ENCODE measurements at regions of chr19 and their contacts with region 1.

Region 1: DNA sequence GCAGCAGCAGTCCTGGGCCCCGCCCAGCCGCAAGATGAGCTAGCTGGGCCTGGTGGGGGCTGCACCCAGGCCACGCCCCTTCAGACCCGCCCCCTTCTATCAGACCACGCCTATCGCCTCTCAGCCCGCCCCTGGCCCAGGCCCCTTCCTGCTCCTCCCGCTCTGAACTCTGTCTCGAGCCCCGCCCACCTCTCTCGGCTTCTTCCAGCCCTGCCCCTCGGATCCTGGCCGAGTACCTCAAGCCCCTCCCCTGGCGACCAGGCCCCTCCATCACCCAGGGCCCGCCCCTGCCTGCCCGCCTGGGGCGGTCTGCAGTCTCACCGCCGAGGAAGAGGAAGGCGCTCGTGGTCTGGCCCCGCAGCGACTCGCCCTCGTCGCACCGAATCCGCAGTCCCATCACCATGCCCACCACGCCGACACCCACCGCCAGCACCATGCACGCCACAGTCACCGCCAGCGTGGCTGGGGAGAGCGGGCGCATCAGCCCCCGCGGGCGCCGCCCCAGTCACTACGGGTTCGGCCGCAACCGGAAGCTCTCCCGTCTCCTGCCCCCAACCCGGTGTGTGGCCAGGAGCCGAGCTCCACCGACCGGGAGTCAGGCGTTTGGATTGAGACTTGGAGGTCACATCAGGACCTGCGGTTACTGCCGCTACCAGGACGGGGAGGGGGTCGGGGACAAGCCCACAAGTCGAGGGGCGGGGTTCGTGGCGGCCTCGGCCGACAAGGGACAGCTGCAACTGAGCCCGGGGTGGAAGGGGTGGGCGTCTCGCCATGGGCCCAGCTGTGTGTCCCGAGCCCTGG is 1.0 kb downstream of the CLDND2 start:
- DNase-seq: peak; percentile 98
- H3K4me3 ChIP-seq: peak overlapping the region; percentile 83
- H3K27ac ChIP-seq: peak overlapping the region; percentile 81
- H3K27me3 ChIP-seq: peaks cover 6% of the 10 kb centered on the region
- CTCF ChIP-seq: no peak

Region 2: GRCh38 chr19:51219307-51219706 is 148.5 kb before region 1 on chr19:
- CTCF ChIA-PET with region 1: no interaction called
- POLR2A ChIA-PET with region 1: no interaction called
- DNase-seq: no peak
- H3K4me3 ChIP-seq: no peak overlapping the region
- H3K27ac ChIP-seq: no peak overlapping the region
- H3K27me3 ChIP-seq: no peaks in the 10 kb centered on the region
- CTCF ChIP-seq: no peak

Region 3: DNA sequence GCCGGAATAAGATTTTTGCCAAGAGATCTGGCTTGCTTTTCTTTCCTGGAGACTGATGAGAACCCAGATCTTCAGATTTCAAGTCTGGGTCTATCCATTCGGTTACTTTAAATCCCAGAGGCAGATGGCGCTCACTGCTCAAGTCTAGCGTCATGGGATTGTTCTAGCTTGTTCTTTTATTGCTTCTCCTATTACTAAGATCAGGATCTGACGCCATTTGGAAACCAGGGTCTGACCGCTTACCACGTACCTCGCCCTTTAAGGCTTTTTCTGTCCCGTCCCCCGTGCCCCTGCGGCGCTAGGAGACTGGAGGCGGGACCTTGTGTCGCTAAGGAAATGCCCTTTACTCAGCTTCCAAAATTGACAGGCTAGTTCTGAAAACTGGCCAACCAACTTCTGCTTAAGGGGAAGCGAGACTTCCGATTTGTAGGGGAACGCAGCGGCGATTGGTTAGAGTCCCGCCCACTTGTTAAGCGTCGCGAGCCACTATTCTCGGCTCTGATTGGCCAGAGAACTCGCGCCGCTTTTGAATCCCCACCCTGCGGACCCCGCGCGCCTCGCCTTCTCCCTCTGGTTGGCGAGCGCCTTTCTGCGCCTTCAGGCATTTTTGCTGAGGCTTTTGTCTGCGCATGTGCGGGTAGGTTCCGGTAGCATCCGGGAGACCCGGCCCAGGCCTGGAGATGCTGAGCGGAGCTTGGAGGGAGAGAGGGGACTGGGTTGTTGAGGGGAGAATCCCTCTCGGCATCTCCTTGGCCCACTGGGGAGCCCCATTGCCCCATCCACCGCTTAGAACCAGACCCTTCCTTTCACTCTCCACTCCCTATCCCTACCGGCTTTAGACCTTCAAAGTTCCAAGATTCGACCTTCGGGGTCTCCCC is 26.4 kb after region 1 on chr19:
- CTCF ChIA-PET with region 1: interaction called, 5 read pairs
- POLR2A ChIA-PET with region 1: interaction called, 12 read pairs
- DNase-seq: peak; percentile 96
- H3K4me3 ChIP-seq: peak overlapping the region; percentile 59
- H3K27ac ChIP-seq: peak overlapping the region; percentile 81
- H3K27me3 ChIP-seq: no peaks in the 10 kb centered on the region
- CTCF ChIP-seq: no peak

Measured in AG04450 (cell line).